ENCODE measurements at regions of chr2 and their contacts with region 1.

Region 1: GRCh38 chr2:24164125-24164973 is 10.5 kb upstream of the FAM228A start:
- DNase-seq: peak; percentile 21
- ATAC-seq: peak; percentile 95
- H3K4me3 ChIP-seq: no peak overlapping the region
- H3K27ac ChIP-seq: no peak overlapping the region; the same call in 1 of the 2 replicates
- H3K4me1 ChIP-seq: 0 out of 2 replicates have a peak, but pooled peaks cover 4% of the 10 kb centered on the region
- H3K27me3 ChIP-seq: no peaks in the 10 kb centered on the region
- CTCF ChIP-seq: peak; percentile 73 to 88 (median 79)
- EP300 ChIP-seq: no peak
- POLR2A ChIP-seq: no peak
- RAD21 ChIP-seq: peak; percentile 59

Region 2: DNA sequence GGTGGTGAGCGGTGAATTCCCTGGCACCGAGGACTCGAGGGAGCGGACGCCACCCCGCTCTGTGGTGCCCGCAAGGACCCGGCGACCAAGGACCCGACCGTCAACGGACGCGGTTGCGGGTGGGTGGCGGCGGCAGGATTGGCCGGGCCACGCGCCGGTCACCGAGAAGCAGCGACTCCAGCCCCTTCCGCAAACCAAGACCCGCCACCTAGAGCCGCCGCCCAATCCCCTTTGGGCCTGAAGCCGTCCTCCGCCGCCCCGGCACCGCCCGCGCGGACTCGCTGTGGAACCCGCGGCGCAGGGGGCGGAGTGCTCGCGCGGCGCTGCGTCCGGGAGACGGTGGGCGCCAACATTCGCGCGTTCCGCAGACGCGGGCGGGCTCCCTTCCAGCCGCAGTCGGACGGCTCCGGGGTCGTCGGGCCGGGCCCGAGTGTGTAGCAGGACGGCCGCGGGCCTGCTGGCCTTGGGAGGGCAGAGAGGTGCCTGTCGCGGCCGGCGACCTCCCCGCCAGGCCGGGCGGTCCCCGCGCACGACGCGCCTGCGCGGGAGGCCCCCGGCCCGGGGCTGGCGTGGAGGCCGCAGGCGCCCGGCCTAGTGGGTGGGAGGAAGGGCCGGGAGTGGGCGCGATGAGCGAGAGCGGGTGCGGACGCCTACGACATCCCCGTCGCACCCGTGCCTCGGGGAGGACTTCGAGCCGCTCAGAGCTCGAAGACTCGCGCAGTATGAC is 41.0 kb before region 1 on chr2 and contains the starts of genes FAM228B and PFN4:
- CTCF ChIA-PET with region 1: interaction called, 3 read pairs
- POLR2A ChIA-PET with region 1: no interaction called
- RAD21 ChIA-PET with region 1: no interaction called
- SMC1A ChIA-PET with region 1: interaction called, 12 read pairs
- in situ Hi-C with region 1: no loop called
- intact Hi-C with region 1: no loop called
- DNase-seq: peak; percentile 41
- ATAC-seq: peak; percentile 98
- H3K4me3 ChIP-seq: peak within 1 kb of the TSS; percentile 82
- H3K27ac ChIP-seq: peak within 1 kb of the TSS; percentile 90
- H3K4me1 ChIP-seq: no peaks in the 10 kb centered on the region
- H3K27me3 ChIP-seq: no peaks in the 10 kb centered on the region
- CTCF ChIP-seq: no peak
- EP300 ChIP-seq: no peak
- POLR2A ChIP-seq: peak; percentile 95
- RAD21 ChIP-seq: no peak
- polyA plus RNA-seq, gene FAM228B: 5.1 to 5.8 TPM
- polyA plus RNA-seq, gene PFN4: 0.14 to 0.38 TPM

Region 3: GRCh38 chr2:24175631-24176187 is 11.4 kb after region 1 on chr2:
- CTCF ChIA-PET with region 1: interaction called, 15 read pairs
- POLR2A ChIA-PET with region 1: interaction called, 4 read pairs
- RAD21 ChIA-PET with region 1: no interaction called
- SMC1A ChIA-PET with region 1: interaction called, 6 read pairs
- in situ Hi-C with region 1: no loop called
- intact Hi-C with region 1: no loop called
- DNase-seq: no peak
- ATAC-seq: no peak
- H3K4me3 ChIP-seq: no peak overlapping the region
- H3K27ac ChIP-seq: no peak overlapping the region
- H3K4me1 ChIP-seq: no peaks in the 10 kb centered on the region
- H3K27me3 ChIP-seq: no peaks in the 10 kb centered on the region
- CTCF ChIP-seq: no peak
- EP300 ChIP-seq: no peak
- POLR2A ChIP-seq: no peak
- RAD21 ChIP-seq: no peak

Region 4: DNA sequence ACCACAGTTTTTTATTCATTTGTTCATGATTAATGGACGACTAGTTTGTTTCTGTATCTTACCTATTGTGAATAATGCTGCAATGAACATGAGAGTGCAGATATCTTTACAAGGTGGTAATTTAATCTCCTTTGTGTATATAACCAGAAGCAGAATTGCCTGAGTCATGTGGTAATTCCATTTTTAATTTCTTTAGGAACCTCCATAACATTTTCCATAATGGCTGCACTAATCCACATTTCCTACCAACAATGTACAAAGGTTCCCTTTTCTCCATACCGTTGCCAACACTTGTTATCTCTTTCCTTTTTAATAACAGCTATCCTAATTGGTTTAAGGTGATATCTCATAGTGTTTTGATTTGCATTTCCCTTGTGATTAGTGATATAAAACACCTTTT is 363.2 kb after region 1 on chr2:
- CTCF ChIA-PET with region 1: no interaction called
- POLR2A ChIA-PET with region 1: no interaction called
- RAD21 ChIA-PET with region 1: no interaction called
- SMC1A ChIA-PET with region 1: no interaction called
- in situ Hi-C with region 1: no loop called
- intact Hi-C with region 1: no loop called
- DNase-seq: no peak
- ATAC-seq: no peak
- H3K4me3 ChIP-seq: no peak overlapping the region
- H3K27ac ChIP-seq: no peak overlapping the region
- H3K4me1 ChIP-seq: no peaks in the 10 kb centered on the region
- H3K27me3 ChIP-seq: no peaks in the 10 kb centered on the region
- CTCF ChIP-seq: no peak
- EP300 ChIP-seq: no peak
- POLR2A ChIP-seq: no peak
- RAD21 ChIP-seq: no peak